ENCODE measurements at regions of chr3 and their contacts with region 1.

Region 1: GRCh38 chr3:50272911-50273693 is 4.2 kb downstream of the SEMA3B start:
- DNase-seq: no peak
- ATAC-seq: peak; percentile 62
- H3K4me3 ChIP-seq: peak overlapping the region; percentile 43 to 57
- H3K27ac ChIP-seq: peak overlapping the region; percentile 27; the same call in 1 of the 2 replicates
- H3K4me1 ChIP-seq: peaks cover 51 to 62% of the 10 kb centered on the region in 2 experiments
- H3K27me3 ChIP-seq: no peaks in the 10 kb centered on the region
- CTCF ChIP-seq: peak in 2 of 3 experiments; percentile 93 to 96; a peak in 4 of 6 replicates
- POLR2A ChIP-seq: no peak
- RAD21 ChIP-seq: no peak

Region 2: GRCh38 chr3:50121416-50122032 is 151.6 kb before region 1 on chr3:
- CTCF ChIA-PET with region 1: no interaction called
- POLR2A ChIA-PET with region 1: no interaction called
- RAD21 ChIA-PET with region 1: no interaction called
- intact Hi-C with region 1: loop called (anchors 5 kb)
- DNase-seq: peak; percentile 56
- ATAC-seq: peak; percentile 94
- H3K4me3 ChIP-seq: no peak overlapping the region
- H3K27ac ChIP-seq: no peak overlapping the region
- H3K4me1 ChIP-seq: no peaks in the 10 kb centered on the region
- H3K27me3 ChIP-seq: no peaks in the 10 kb centered on the region
- CTCF ChIP-seq: peak; percentile 81 to 84 (median 82)
- POLR2A ChIP-seq: no peak
- RAD21 ChIP-seq: peak; percentile 91

Region 3: DNA sequence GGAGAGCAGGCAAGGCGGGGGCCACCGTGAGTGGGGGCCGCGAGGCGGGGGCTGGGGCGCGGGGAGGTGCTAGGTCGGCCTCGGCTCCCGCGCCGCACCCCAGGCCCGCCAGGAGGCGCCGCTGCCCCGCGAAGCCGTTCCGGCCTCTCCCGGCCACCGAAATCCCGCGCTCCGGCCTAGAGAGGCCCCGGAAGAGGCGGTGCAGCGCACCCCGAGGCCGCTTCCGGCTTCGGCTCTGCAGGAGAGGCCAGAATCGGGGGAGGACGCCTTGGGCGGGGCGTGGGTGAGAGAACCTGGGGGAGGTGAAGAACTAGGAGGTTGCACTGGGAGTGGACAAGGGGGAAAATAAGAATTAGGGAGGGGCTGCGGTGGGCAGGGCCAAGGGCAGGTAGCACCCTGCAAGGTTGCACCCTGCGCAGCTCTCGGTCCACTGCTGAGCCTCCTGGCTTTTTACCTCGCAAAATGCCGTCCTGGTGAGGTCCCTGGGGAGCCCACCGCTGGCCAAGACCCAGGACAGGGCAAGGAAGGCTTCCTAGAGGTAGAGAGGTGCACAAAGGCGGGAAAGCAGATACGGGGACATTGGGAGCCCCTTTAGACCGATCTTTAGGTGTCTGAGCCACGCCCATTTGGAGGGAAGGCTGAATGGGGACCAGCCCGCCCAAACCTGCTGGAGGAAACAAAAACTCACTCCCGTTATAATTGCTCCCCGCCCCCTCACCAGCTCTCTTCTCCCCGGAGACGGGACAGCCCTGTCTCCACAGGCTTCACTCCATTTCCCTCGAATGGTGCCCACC is 45.5 kb before region 1 on chr3:
- CTCF ChIA-PET with region 1: interaction called, 13 read pairs
- POLR2A ChIA-PET with region 1: no interaction called
- RAD21 ChIA-PET with region 1: interaction called in 1 of 2 experiments, 6 read pairs
- intact Hi-C with region 1: loop called (anchors 1 kb)
- DNase-seq: peak; percentile 95
- ATAC-seq: peak; percentile 86
- H3K4me3 ChIP-seq: peak overlapping the region; percentile 58 to 87
- H3K27ac ChIP-seq: peak overlapping the region; percentile 87
- H3K4me1 ChIP-seq: peaks cover 10 to 34% of the 10 kb centered on the region in 2 experiments
- H3K27me3 ChIP-seq: no peaks in the 10 kb centered on the region
- CTCF ChIP-seq: peak in 2 of 3 experiments; percentile 70 to 76; a peak in 4 of 6 replicates
- POLR2A ChIP-seq: peak; percentile 62
- RAD21 ChIP-seq: no peak

Region 4: GRCh38 chr3:50321336-50322114 is 48.4 kb after region 1 on chr3:
- CTCF ChIA-PET with region 1: interaction called, 4 read pairs
- POLR2A ChIA-PET with region 1: no interaction called
- RAD21 ChIA-PET with region 1: no interaction called
- intact Hi-C with region 1: loop called (anchors 1 kb)
- DNase-seq: peak; percentile 84
- ATAC-seq: peak; percentile 66
- H3K4me3 ChIP-seq: peak overlapping the region; percentile 64 to 92
- H3K27ac ChIP-seq: peak overlapping the region; percentile 93
- H3K4me1 ChIP-seq: peaks cover 49 to 76% of the 10 kb centered on the region in 2 experiments
- H3K27me3 ChIP-seq: no peaks in the 10 kb centered on the region
- CTCF ChIP-seq: peak in 2 of 3 experiments; percentile 70 to 71; a peak in 4 of 6 replicates
- POLR2A ChIP-seq: peak; percentile 79
- RAD21 ChIP-seq: no peak

Region 5: DNA sequence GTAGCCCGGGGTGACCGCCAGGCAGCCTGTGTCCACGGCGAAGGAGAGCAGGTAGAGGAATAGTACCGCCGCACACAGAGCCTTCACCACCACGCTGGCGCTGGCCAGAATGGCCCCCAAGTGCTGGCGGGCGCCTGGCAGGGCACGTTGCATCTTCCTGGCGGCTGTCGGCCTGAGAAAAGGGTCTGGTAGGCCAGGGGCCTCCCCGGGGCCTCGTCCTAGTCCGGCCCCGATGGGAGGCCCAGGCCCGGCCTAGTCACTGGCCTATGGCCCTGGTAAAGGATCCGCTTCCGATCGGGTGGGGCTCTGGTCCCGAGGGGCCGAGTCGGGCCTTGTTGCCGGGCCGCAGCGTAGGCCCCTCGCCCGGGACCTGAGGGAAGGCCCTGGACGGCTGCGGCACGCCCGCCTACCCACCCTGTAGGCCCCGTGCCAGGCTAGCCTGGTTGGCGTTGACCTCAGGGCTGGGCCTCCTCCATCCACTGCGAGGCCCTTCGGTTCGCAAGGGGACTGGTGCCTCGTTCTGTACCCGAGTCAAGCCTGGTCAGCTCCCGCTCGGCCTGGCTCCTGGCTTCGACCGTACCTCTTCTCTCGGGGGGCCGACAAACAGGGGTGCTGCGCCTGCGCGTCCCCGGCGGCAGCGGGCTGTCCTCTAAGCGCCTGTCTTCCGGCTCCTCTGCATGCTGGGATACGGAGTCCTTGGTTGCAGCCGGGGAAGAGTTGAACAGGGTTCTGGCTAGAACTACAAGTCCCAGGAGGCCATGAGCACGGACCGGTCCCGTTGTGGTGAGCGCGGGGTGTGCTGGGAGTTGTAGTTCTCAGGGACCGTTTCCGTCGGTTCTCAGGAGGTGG is 86.0 kb after region 1 on chr3 and contains the start of gene TMEM115:
- CTCF ChIA-PET with region 1: no interaction called
- POLR2A ChIA-PET with region 1: no interaction called
- RAD21 ChIA-PET with region 1: no interaction called
- intact Hi-C with region 1: no loop called
- DNase-seq: peak; percentile 96
- ATAC-seq: peak; percentile 99
- H3K4me3 ChIP-seq: peak within 1 kb of the TSS; percentile 83 to 87
- H3K27ac ChIP-seq: peak within 1 kb of the TSS; percentile 82
- H3K4me1 ChIP-seq: peaks cover 9 to 36% of the 10 kb centered on the region in 2 experiments; a peak in 3 of 4 replicates
- H3K27me3 ChIP-seq: no peaks in the 10 kb centered on the region
- CTCF ChIP-seq: no peak
- POLR2A ChIP-seq: no peak
- RAD21 ChIP-seq: no peak
- total RNA-seq, gene TMEM115: 24.6 TPM